Dorsolateral prefrontal cortex (tissue), 120 donors: ENCODE measurements at regions of chr1 and their contacts with region 1.

Region 1: DNA sequence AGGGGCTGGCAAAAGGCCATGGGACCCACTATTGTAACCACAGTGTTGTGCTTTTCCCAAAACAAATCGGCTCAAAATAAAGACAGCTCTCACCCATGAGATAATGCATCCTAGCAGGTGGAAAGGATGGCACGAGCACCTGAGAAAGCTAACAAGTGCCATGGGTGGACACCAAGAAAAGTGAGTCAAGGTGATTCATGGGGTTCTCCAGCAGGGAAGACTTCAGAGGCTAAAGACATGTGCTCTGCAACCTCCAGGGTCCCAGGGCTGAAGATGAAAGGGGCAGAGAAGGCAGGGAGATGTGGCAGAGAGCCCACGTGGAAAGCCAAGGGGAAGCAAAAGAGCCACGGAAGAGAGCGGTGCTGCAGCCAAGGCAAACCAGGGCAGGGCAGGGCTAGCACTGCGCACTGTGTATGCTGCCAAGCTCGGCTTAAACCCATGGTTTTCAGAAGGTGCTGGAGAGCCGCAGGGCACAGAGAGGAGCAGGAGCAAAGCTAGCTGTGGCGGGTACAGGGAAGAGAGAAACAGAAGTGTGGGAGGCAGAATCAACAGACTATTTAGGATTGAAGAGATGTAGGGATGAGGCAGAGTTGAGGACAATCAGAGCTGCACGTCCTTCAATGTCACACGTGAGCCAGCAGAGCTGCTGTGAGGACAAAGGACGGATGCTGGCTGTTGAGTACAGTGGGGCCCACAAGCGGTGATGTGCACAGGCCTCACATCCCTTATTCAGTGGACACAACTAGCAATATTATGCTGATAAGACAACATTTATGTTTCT is 41.8 kb upstream of the C1orf198 start:
- DNase-seq: peak; percentile 43 to 86 (median 68)
- H3K4me3 ChIP-seq: peak overlapping the region in 6 of 59 donors; percentile 2 to 41 (median 14)
- H3K27ac ChIP-seq: peak overlapping the region; percentile 39 to 94 (median 85)
- H3K27me3 ChIP-seq: no peaks in the 10 kb centered on the region
- CTCF ChIP-seq: peak in 14 of 56 donors; percentile 9 to 44 (median 20)

Region 2: DNA sequence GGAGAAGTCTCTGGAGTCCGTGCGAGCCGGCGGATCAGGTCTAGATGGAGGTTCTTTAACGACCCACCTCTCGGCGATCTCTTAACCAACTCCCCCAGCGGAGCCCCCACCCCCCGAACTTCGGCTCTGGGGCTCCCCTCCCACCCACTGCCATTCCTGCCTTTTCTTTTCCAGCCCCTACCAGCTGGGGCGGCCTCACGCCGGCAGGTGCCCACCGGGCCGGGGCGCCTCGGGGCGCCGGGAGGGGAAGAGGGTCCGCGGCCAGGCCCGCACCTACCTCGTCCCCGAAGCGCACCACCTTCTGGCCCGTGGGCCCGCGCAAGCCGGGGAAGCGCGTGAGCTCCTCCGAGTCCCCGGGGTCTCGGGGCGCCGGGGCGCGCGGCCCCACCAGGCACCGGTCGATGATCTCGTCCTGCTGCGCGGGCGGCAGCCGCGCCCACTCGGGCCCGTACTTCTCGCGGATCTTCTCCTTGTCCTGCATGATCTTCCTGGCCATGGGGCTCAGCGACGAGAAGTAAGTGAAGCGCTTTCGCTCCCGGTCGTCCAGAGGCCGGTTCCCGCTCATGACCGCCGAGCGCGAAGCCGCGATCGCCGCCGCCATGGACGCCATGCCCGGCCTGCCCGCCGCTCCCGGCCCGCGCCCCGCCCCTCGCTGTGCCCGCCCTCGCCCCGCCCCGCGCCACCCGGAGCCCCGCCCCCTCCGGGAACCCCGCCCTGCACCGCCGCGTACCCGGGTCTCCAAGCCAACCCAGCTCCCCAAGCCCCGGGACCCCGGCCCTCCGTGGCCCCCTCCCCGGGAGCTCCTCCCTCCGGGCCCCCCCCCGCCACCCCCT is 42.0 kb before region 1 on chr1 and contains the start of gene C1orf198:
- intact Hi-C with region 1: loop called (anchors 5 kb)
- DNase-seq: peak; percentile 63 to 86 (median 76)
- H3K4me3 ChIP-seq: peak within 1 kb of the TSS; percentile 48 to 99 (median 90)
- H3K27ac ChIP-seq: peak within 1 kb of the TSS; percentile 46 to 97 (median 93)
- H3K27me3 ChIP-seq: no peaks in the 10 kb centered on the region
- CTCF ChIP-seq: peak in 1 of 56 donors; percentile 21
- total RNA-seq, gene C1orf198: 43.1 to 244 (median 83.2) TPM

Region 3: GRCh38 chr1:230978491-230979388 is 68.6 kb after region 1 on chr1 and contains the starts of genes ARV1 and TTC13:
- intact Hi-C with region 1: no loop called
- DNase-seq: peak; percentile 97 to 99 (median 99)
- H3K4me3 ChIP-seq: peak within 1 kb of the TSS; percentile 67 to 99 (median 87)
- H3K27ac ChIP-seq: peak within 1 kb of the TSS in 57 of 59 donors; percentile 5 to 89 (median 74)
- H3K27me3 ChIP-seq: no peaks in the 10 kb centered on the region
- CTCF ChIP-seq: peak in 51 of 56 donors; percentile 6 to 73 (median 46)
- total RNA-seq, gene ARV1: 13.5 to 33.0 (median 23.5) TPM
- total RNA-seq, gene TTC13: 15.5 to 38.2 (median 26.9) TPM